Mammary epithelial cell (primary cell): ENCODE measurements at regions of chr1 and their contacts with region 1.

Region 1: GRCh38 chr1:208132287-208132883 is 111.8 kb downstream of the PLXNA2 start:
- DNase-seq: peak; percentile 77
- H3K4me3 ChIP-seq: no peak overlapping the region
- H3K27ac ChIP-seq: peak overlapping the region; percentile 35
- H3K4me1 ChIP-seq: peaks cover 7% of the 10 kb centered on the region
- H3K27me3 ChIP-seq: no peaks in the 10 kb centered on the region
- CTCF ChIP-seq: peak; percentile 92 to 93

Region 2: GRCh38 chr1:207925210-207925609 is 207.2 kb before region 1 on chr1:
- CTCF ChIA-PET with region 1: no interaction called
- dilution Hi-C with region 1: no loop called
- in situ Hi-C with region 1: no loop called
- intact Hi-C with region 1: no loop called
- DNase-seq: no peak
- H3K4me3 ChIP-seq: no peak overlapping the region
- H3K27ac ChIP-seq: no peak overlapping the region
- H3K4me1 ChIP-seq: no peaks in the 10 kb centered on the region
- H3K27me3 ChIP-seq: peaks cover 3% of the 10 kb centered on the region
- CTCF ChIP-seq: no peak

Region 3: DNA sequence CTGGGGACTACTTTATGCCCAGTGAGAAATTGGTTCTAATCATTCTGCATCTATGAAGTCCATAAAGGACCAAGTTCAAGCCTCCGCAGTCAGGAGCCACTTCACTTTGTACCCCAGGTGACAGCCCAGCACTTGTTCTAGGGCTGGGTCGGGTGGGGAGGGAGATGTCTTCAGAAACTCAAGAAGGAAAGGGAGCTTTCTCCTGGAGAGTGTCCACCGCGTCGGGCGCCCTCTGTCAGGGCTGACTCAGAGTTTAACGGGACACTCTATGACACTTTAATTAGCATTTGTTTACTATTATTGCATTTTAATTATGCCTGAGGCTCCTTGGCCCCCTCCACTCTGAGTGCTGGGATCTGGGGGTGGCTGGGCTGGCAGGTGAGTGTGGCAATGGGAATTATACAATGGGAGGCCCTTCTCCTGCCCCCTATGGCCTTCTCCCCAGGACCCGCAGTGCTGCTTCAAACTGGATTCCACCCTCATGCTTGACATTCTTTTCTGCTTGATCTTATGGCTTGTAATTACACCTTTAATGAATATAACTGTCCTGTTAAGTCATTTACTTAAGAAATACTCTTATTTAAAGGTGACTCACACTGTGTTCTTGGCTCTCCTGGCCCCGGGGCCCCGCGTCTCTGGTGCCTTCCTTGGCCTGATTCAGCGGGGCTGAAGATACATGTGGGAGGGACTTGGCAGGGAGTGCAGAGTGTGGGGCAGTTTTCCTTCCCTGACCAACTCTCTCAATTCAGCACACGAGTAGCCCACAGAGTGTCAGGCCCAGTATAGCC is 24.8 kb before region 1 on chr1:
- CTCF ChIA-PET with region 1: no interaction called
- dilution Hi-C with region 1: no loop called
- in situ Hi-C with region 1: no loop called
- intact Hi-C with region 1: loop called (anchors 2 kb)
- DNase-seq: peak; percentile 92
- H3K4me3 ChIP-seq: no peak overlapping the region
- H3K27ac ChIP-seq: peak overlapping the region; percentile 36
- H3K4me1 ChIP-seq: peaks cover 27% of the 10 kb centered on the region
- H3K27me3 ChIP-seq: no peaks in the 10 kb centered on the region
- CTCF ChIP-seq: no peak

Region 4: DNA sequence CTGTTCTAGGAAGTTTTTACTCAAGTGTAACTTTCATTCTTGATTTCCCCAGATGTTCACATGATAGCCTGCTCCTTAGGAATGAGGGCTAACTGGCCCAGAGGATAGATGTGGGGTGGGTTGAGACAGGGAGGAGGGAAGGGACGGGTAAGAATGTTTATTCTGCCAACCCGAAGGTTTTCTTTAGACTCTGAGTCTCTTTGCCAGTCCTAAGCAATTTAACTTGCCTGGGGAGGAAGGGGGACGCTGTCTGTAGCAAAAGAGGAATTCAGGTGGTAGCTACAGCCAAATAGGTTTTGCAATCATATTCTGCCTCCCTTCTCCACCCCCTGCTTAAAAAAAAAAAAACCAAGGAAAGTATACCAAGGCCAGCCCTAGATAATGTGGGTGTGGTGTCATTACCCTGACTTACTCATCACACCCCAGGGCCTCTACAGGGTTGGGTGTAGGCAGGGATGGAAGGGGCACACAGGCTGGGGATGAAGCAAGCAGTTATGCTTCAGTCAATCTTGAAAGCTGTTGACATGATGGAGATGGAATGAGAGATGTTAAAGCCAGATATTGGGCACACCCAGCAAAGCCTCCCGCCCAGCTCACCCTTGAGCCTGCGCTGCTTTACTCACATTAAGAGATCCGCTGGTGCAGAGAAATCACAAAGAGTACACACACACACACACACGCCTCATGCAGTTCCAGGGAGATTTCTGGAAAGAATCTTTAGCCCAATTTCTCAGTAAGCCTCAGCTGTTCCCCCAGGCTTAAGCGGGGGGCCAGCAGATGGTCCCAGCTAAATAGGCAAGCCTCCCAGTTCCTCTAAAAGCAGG is 51.9 kb after region 1 on chr1:
- CTCF ChIA-PET with region 1: interaction called, 4 read pairs
- dilution Hi-C with region 1: no loop called
- in situ Hi-C with region 1: no loop called
- intact Hi-C with region 1: loop called (anchors 1 kb)
- DNase-seq: peak; percentile 99
- H3K4me3 ChIP-seq: no peak overlapping the region
- H3K27ac ChIP-seq: peak overlapping the region; percentile 57
- H3K4me1 ChIP-seq: peaks cover 37% of the 10 kb centered on the region
- H3K27me3 ChIP-seq: no peaks in the 10 kb centered on the region
- CTCF ChIP-seq: no peak

Region 5: GRCh38 chr1:208207388-208208131 is 75.2 kb after region 1 on chr1:
- CTCF ChIA-PET with region 1: no interaction called
- dilution Hi-C with region 1: no loop called
- in situ Hi-C with region 1: no loop called
- intact Hi-C with region 1: loop called (anchors 1 kb)
- DNase-seq: peak; percentile 99
- H3K4me3 ChIP-seq: no peak overlapping the region
- H3K27ac ChIP-seq: peak overlapping the region; percentile 66
- H3K4me1 ChIP-seq: peaks cover 69% of the 10 kb centered on the region
- H3K27me3 ChIP-seq: no peaks in the 10 kb centered on the region
- CTCF ChIP-seq: no peak

Region 6: DNA sequence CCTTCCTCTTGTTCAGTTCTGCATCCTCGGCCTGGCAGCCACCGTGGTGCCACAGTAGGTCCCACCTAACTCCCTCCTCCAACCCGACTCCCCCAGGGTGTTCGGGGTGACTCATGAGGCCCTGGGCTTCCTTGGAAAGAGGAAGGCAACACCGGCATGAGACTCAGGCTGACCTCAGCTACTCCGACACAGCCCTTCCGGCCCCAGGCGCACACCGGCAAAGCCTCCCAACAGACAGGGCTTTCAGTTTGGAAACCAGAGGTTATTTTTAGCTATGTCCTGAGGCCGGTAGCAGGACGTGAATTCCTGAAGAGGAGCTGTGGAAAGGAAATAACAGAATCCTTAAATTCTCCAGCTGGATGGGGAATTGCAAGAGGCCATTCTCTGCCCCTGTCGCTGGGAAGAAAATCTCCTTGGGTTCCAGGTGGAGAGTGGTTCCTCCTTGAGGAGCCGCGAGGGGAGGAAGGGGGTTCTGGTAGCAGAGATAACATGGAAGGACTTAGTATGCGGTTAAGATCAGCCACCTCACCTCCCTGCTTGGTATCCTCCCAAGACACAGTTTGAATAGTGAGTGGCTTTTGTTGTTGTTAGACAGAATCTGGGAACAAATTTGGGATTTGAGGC is 87.4 kb after region 1 on chr1:
- CTCF ChIA-PET with region 1: no interaction called
- dilution Hi-C with region 1: no loop called
- in situ Hi-C with region 1: no loop called
- intact Hi-C with region 1: loop called (anchors 1 kb)
- DNase-seq: peak; percentile 92
- H3K4me3 ChIP-seq: peak overlapping the region in 1 of 3 experiments; percentile 14
- H3K27ac ChIP-seq: peak overlapping the region; percentile 82
- H3K4me1 ChIP-seq: peaks cover 66% of the 10 kb centered on the region
- H3K27me3 ChIP-seq: no peaks in the 10 kb centered on the region
- CTCF ChIP-seq: no peak

Region 7: DNA sequence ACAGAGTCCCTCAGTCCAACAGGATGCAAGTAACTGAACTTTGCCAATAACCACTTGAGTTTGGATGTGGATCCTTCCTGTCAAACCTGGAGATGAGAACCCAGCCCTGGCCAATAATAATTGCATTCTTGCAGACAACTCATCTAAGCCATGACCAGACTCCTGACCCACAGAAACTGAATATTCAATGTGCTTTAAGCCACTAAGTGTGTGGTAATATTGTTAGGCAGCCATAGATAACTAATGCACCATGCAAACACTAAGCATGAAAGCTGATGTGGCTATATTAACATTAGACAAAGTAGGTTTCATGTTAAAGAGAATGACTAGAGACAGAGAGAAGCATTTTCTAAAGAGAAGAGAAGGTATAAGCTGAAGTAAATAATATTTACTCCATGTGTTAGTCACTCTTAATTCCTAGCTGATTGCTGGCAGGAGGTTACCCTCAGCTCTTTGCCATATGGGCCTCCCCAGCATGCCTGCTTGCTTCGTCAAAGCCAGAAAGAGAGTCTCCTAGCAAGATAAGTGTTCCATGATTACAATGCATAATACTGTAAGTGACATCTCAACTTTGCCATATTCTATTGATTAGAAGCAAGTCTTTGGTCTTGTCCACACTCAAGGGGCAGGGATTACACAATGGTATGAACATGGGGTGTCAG is 388.2 kb after region 1 on chr1:
- CTCF ChIA-PET with region 1: no interaction called
- dilution Hi-C with region 1: no loop called
- in situ Hi-C with region 1: no loop called
- intact Hi-C with region 1: no loop called
- DNase-seq: no peak
- H3K4me3 ChIP-seq: no peak overlapping the region
- H3K27ac ChIP-seq: no peak overlapping the region
- H3K4me1 ChIP-seq: peaks cover 4% of the 10 kb centered on the region
- H3K27me3 ChIP-seq: no peaks in the 10 kb centered on the region
- CTCF ChIP-seq: no peak